ENCODE measurements at regions of chr6 and their contacts with region 1.

Region 1: DNA sequence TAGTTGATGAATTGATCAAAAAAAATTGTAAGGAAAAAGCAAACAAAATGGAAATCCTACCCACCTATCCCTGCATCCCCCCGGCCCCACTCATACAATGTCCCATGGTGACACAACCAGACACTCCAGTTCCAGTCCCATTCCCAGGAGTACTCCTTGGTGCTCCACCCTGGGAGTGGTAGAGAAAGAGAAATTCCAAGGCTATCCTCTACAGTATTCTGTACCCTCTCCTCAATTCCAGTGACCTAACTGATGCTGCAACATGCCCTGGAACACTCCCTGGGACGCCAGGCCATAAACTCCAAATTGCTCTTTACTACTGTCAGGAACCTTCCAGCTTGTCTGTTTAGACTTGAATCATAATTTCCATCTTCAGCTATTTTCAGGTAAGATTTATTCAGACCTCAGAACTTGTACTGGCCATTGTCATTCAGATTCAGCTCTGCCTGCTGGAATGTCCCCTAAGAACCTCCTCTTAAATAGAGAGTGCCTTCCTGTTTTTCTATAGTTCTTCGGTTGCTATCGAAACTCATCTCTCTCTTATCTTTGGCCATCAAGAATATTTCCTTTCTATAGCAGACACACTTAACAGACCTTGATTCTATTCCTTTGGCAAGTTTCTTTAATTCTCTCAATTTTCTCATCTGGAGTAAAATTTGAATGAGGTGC is 8.7 kb downstream of the GPX6 start:
- DNase-seq: peak in 4 of 9 donors; percentile 6 to 17 (median 10)
- ATAC-seq: peak; percentile 37
- H3K4me3 ChIP-seq: no peak overlapping the region
- H3K4me3 Mint-ChIP-seq: peak overlapping the region in 9 of 10 donors; percentile 14 to 70 (median 56)
- H3K27ac ChIP-seq: no peak overlapping the region
- H3K27ac Mint-ChIP-seq: peak overlapping the region; percentile 10 to 82 (median 64)
- H3K4me1 ChIP-seq: no peaks in the 10 kb centered on the region
- H3K4me1 Mint-ChIP-seq: peaks cover 11 to 28% (median 20%) of the 10 kb centered on the region in 7 donors
- H3K27me3 ChIP-seq: no peaks in the 10 kb centered on the region
- H3K27me3 Mint-ChIP-seq: peaks cover 0 to 16% (median 9%) of the 10 kb centered on the region in 5 donors

Region 2: GRCh38 chr6:28523241-28523622 is 16.3 kb after region 1 on chr6:
- CTCF ChIA-PET with region 1: no interaction called
- POLR2A ChIA-PET with region 1: interaction called, 3 read pairs
- intact Hi-C with region 1: loop called in 1 of 2 experiments (anchors 2 kb)
- DNase-seq: peak in 7 of 9 donors; percentile 40 to 59 (median 53)
- ATAC-seq: peak; percentile 95
- H3K4me3 ChIP-seq: no peak overlapping the region
- H3K4me3 Mint-ChIP-seq: peak overlapping the region; percentile 13 to 77 (median 67)
- H3K27ac ChIP-seq: no peak overlapping the region
- H3K27ac Mint-ChIP-seq: peak overlapping the region in 4 of 9 donors; percentile 24 to 79 (median 59)
- H3K4me1 ChIP-seq: peaks cover 0 to 25% of the 10 kb centered on the region in 2 donors
- H3K4me1 Mint-ChIP-seq: peaks cover 10 to 40% (median 30%) of the 10 kb centered on the region in 7 donors
- H3K27me3 ChIP-seq: no peaks in the 10 kb centered on the region
- H3K27me3 Mint-ChIP-seq: peaks cover 0 to 66% (median 47%) of the 10 kb centered on the region in 5 donors

Region 3: GRCh38 chr6:28597217-28598005 is 90.5 kb after region 1 on chr6:
- CTCF ChIA-PET with region 1: no interaction called
- POLR2A ChIA-PET with region 1: no interaction called
- intact Hi-C with region 1: no loop called
- DNase-seq: peak in 1 of 9 donors; percentile 21
- ATAC-seq: no peak
- H3K4me3 ChIP-seq: no peak overlapping the region
- H3K4me3 Mint-ChIP-seq: peak overlapping the region in 3 of 10 donors; percentile 22 to 64 (median 39)
- H3K27ac ChIP-seq: no peak overlapping the region
- H3K27ac Mint-ChIP-seq: no peak overlapping the region
- H3K4me1 ChIP-seq: peaks cover 0 to 5% of the 10 kb centered on the region in 2 donors
- H3K4me1 Mint-ChIP-seq: peaks cover 0 to 6% (median 0%) of the 10 kb centered on the region in 7 donors
- H3K27me3 ChIP-seq: peaks cover 3 to 7% of the 10 kb centered on the region in 2 donors
- H3K27me3 Mint-ChIP-seq: peaks cover 59 to 70% (median 65%) of the 10 kb centered on the region in 5 donors

Region 4: DNA sequence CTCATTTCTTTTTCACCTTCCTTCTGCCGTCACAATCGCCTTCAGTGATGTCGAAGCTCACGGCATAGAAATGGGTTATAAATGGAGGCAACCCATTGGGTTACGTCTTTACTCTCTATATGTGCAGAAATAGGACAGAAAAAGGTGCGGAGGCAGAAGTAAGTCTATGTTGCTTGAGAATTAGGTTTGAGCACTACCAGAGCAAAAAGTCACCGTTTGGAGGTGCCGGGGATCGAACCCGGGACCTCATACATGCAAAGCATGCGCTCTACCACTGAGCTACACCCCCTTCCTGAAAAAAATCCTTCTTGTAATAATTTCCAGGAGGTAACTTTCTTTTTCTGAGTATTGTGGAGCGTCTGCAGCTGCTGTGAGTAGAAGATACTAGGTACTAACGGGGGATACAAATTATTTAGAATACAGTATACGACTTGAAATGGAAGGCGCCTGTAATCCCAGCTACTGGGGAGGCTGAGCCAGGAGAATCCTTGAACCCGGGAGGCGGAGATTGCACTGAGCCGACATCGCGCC is 282.7 kb after region 1 on chr6:
- CTCF ChIA-PET with region 1: no interaction called
- POLR2A ChIA-PET with region 1: no interaction called
- intact Hi-C with region 1: no loop called
- DNase-seq: no peak
- ATAC-seq: no peak
- H3K4me3 ChIP-seq: no peak overlapping the region
- H3K4me3 Mint-ChIP-seq: peak overlapping the region in 8 of 10 donors; percentile 25 to 60 (median 48)
- H3K27ac ChIP-seq: no peak overlapping the region
- H3K27ac Mint-ChIP-seq: peak overlapping the region in 6 of 9 donors; percentile 37 to 73 (median 50)
- H3K4me1 ChIP-seq: no peaks in the 10 kb centered on the region
- H3K4me1 Mint-ChIP-seq: peaks cover 4 to 21% (median 12%) of the 10 kb centered on the region in 7 donors
- H3K27me3 ChIP-seq: peaks cover 11 to 46% of the 10 kb centered on the region in 2 donors
- H3K27me3 Mint-ChIP-seq: peaks cover 89 to 97% (median 93%) of the 10 kb centered on the region in 5 donors

Measured in naive thymus-derived CD4-positive, alpha-beta T cell (primary cell).